ENCODE measurements at regions of chrX and their contacts with region 1.

Region 1: DNA sequence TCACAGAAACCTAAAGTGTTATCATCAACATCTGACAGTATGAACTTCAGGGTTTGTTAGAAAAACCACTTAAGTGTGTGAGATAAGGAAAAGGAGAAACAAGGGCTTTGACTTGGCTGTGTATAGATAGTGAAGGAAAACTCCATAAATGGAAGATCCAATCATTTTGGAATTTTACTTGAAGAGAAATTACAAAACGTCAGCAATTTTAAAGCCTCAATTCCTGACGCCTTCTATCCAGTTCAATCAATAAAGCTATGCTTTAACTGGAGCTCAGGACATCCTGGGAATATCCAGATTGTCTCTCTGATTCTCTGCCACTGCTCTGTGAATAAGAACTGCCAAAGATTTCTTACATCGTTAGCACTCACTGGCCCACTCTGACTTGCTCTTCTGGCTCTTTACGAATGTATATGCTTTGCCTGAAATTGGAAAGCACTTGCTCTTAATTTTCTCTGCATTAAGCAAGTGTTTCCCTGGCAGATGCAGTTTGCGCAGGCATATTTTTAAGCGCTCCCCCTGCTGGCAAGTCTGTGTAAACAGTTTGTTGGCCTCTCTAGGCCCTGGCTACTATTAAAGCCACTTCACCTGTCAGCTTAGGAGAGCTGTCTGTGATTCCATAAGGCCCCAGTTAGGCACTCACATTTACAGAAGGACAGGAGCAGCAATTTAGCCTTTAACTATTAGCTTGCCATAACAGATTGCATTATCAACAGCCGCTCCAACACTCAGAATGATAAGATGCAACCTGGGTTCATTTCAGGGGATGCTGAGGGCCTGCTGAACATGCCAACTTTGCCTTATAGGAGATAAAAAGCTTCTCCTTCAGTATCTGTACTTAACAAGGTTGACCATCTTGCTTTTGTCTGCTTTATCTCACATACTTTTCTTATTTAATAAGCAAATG is 251.4 kb upstream of the DDX53 start:
- DNase-seq: peak; percentile 40
- H3K4me3 ChIP-seq: no peak overlapping the region
- H3K27ac ChIP-seq: no peak overlapping the region
- H3K4me1 ChIP-seq: no peaks in the 10 kb centered on the region
- H3K27me3 ChIP-seq: no peaks in the 10 kb centered on the region
- CTCF ChIP-seq: peak; percentile 90
- EP300 ChIP-seq: no peak
- RAD21 ChIP-seq: peak; percentile 65

Region 2: DNA sequence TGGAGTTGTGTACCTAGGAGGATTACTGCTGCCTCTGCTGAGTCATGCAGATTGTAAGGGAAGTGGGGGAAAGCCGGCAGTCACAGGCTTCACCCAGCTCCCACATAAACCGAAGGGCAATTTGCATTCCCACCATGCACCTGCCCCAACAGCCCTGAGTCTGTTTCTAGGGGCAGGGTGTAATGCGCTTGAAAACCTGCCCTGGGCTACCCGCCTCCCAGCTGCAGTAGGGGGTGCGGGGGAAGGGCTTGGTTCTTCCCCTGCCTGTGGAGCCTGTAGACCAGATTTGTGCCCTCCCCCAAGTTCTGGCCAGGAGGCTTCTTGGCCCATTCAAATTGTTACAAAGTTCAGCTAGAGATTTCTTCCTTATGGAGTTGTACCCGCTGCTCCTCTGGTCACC is 17.8 kb before region 1 on chrX:
- CTCF ChIA-PET with region 1: interaction called, 17 read pairs
- POLR2A ChIA-PET with region 1: no interaction called
- DNase-seq: no peak
- H3K4me3 ChIP-seq: no peak overlapping the region
- H3K27ac ChIP-seq: no peak overlapping the region
- H3K4me1 ChIP-seq: no peaks in the 10 kb centered on the region
- H3K27me3 ChIP-seq: no peaks in the 10 kb centered on the region
- CTCF ChIP-seq: no peak
- EP300 ChIP-seq: no peak
- RAD21 ChIP-seq: no peak

Region 3: DNA sequence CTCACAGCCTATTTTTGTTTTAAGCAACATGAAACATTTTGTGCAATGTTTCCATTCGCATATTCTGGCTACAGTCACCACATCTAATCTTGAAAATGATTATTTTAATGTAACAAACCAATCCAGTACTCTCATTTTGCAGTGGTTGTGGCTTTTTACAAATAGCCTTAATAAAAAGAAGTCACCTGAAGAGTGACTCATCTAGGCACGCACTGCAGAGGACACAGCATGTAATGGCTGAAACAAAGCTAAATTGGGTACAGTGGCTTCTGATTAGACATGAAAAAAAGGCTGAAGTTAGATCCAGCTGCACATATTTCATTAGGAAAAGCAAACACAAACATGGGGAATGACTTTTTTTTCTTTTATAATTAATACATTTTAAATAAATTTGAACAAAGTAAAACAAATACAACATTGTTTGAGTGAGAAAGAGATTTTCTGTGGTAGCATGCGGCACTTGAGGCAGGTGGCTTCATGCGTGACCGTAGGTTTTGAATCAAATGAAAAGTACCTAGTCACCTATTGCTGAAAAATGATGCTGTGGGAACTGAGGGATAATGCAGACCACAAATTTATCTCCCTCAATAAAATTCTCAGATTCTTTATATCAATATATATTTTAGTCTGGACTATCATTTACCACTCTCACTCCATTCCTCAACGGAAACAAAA is 10.6 kb after region 1 on chrX:
- CTCF ChIA-PET with region 1: interaction called, 23 read pairs
- POLR2A ChIA-PET with region 1: no interaction called
- DNase-seq: no peak
- H3K4me3 ChIP-seq: no peak overlapping the region
- H3K27ac ChIP-seq: no peak overlapping the region
- H3K4me1 ChIP-seq: no peaks in the 10 kb centered on the region
- H3K27me3 ChIP-seq: 0 out of 2 replicates have a peak, but pooled peaks cover 4% of the 10 kb centered on the region
- CTCF ChIP-seq: no peak
- EP300 ChIP-seq: no peak
- RAD21 ChIP-seq: no peak